Psoas muscle (tissue), 8 donors: ENCODE measurements at regions of chr9 and their contacts with region 1.

Region 1: DNA sequence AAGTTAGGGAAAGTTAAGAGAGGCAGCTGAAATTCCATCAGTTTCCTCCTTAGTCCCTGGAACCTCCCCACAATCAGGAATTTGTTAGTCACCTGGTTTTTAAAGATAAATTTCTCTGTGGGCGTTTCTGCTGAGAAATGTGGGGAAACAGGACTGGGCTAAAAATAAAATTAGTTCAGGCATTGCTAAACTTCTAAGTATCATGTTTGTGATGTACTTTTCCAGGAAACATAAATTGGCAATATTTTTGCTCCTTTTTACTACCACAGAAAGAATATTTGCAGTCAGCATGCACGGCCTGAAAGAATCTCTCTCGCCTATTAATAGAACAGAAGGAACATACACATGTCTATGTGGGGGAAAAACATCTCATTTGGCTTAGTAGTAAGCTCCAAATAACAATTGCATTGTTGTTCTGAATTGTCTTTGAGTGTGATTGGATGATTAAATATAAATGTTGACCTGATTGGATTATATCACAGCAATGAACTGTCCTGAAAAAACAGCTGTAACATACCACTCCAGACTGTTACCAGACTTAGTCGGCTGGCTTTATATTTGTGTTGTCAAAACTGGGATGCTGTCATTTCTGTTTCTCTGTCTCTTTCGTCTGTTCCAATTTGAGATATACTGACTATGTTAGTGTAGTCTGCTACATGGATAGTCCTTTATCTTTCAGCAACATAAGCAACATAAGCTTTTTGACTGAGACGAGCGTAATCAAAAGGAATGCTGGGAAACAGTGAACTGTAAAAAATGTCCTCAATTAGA is 12.9 kb downstream of the TJP2 start:
- DNase-seq: no peak
- ATAC-seq: peak; percentile 76 to 93 (median 81)
- H3K4me3 ChIP-seq: no peak overlapping the region
- H3K27ac ChIP-seq: peak overlapping the region; percentile 66
- H3K4me1 ChIP-seq: peaks cover 28% of the 10 kb centered on the region
- H3K27me3 ChIP-seq: no peaks in the 10 kb centered on the region
- CTCF ChIP-seq: no peak

Region 2: DNA sequence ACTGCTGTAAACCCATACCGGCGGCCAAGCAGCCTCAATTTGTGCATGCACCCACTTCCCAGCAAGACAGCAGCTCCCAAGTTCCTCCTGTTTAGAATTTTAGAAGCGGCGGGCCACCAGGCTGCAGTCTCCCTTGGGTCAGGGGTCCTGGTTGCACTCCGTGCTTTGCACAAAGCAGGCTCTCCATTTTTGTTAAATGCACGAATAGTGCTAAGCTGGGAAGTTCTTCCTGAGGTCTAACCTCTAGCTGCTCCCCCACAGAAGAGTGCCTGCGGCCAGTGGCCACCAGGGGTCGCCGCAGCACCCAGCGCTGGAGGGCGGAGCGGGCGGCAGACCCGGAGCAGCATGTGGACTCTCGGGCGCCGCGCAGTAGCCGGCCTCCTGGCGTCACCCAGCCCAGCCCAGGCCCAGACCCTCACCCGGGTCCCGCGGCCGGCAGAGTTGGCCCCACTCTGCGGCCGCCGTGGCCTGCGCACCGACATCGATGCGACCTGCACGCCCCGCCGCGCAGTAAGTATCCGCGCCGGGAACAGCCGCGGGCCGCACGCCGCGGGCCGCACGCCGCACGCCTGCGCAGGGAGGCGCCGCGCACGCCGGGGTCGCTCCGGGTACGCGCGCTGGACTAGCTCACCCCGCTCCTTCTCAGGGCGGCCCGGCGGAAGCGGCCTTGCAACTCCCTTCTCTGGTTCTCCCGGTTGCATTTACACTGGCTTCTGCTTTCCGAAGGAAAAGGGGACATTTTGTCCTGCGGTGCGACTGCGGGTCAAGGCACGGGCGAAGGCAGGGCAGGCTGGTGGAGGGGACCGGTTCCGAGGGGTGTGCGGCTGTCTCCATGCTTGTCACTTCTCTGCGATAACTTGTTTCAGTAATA is 151.4 kb before region 1 on chr9 and contains the start of gene FXN:
- intact Hi-C with region 1: loop called in 1 of 2 experiments (anchors 5 kb)
- DNase-seq: peak; percentile 85 to 91
- ATAC-seq: peak; percentile 96 to 97 (median 96)
- H3K4me3 ChIP-seq: peak within 1 kb of the TSS; percentile 92
- H3K27ac ChIP-seq: peak within 1 kb of the TSS; percentile 92
- H3K4me1 ChIP-seq: no peaks in the 10 kb centered on the region
- H3K27me3 ChIP-seq: no peaks in the 10 kb centered on the region
- CTCF ChIP-seq: peak; percentile 99
- total RNA-seq, gene FXN: 17.9 to 25.0 (median 18.7) TPM

Region 3: DNA sequence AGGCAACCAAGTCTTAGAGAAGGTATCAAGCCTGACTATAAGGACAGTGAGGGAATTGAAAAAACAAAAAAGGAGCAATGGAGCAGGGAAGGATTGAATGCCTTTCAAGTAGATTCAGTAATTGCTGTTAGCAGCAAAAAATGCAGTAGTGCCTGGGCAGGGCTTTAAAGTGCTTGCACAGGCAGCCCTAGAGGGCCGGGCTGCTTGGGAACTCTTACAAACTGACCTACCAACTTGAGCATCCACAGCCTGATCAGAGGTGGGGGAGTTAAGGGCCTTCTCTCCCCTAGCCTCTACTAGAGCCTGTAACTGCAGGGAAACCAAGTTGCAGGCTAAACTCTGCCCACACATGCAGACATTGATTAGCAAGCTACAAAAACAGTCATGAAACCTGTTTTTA is 132.0 kb before region 1 on chr9:
- intact Hi-C with region 1: loop called in 1 of 2 experiments (anchors 5 kb)
- DNase-seq: no peak
- ATAC-seq: no peak
- H3K4me3 ChIP-seq: no peak overlapping the region
- H3K27ac ChIP-seq: no peak overlapping the region
- H3K4me1 ChIP-seq: no peaks in the 10 kb centered on the region
- H3K27me3 ChIP-seq: no peaks in the 10 kb centered on the region
- CTCF ChIP-seq: no peak

Region 4: DNA sequence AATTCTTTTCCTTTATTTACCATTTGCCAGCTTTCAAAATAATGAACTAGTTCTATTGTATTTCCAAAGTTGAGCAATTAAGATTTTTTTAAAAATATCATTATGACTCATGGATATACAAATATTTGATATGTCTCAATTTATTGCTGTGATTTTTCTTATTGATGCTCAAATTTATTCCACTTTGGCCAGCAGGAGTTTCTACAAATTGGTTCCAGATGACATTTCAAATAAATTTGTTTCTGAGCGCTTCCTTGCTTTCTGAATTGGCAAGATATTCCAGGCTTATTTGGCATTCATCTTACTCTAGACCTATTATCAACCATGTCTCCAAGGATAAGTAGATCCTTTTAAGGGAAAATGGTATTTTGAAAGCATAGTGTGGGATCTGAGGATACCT is 71.4 kb before region 1 on chr9:
- intact Hi-C with region 1: loop called in 1 of 2 experiments (anchors 5 kb)
- DNase-seq: no peak
- ATAC-seq: no peak
- H3K4me3 ChIP-seq: no peak overlapping the region
- H3K27ac ChIP-seq: no peak overlapping the region
- H3K4me1 ChIP-seq: no peaks in the 10 kb centered on the region
- H3K27me3 ChIP-seq: no peaks in the 10 kb centered on the region
- CTCF ChIP-seq: no peak